ENCODE measurements at regions of chr14 and their contacts with region 1.

Region 1: GRCh38 chr14:70567791-70568190 is 32.7 kb downstream of the MED6 start:
- DNase-seq: peak; percentile 28
- H3K4me3 Mint-ChIP-seq: no peak overlapping the region
- H3K27ac Mint-ChIP-seq: no peak overlapping the region
- H3K4me1 Mint-ChIP-seq: no peaks in the 10 kb centered on the region
- H3K27me3 Mint-ChIP-seq: no peaks in the 10 kb centered on the region

Region 2: DNA sequence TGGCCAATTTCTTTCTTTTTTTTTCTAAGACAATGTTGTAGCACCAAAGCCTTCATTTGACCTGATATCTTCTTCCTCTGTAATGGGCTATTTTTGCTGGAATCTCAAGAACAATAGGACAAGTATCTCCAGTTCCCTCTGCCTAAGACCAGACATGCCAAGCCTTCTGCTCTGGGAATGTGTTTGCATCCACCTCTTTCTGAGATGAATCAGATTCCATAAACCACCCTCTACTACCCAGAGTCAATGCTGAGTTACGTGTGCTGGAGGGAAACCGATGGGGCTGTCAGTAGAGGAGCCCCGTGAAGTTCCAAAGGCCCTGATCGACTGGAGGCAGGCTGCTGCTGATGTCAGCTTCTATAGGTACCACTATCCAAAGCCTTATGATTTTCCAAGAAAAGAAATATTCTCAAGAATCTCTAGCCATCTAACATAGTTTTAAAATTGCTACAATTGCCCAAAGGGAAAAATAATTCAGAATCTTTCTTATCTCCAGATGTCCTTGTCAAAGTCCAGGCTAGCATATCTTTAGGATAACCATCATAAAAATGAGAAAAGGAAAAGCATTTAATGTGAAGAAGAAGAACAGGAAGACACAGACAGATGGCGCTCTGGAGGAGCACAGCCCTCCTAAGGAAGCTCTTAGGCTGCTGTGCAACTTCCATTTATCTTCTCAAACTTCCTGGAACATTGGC is 481.0 kb before region 1 on chr14:
- CTCF ChIA-PET with region 1: interaction called, 22 read pairs
- DNase-seq: peak; percentile 25
- H3K4me3 Mint-ChIP-seq: no peak overlapping the region
- H3K27ac Mint-ChIP-seq: no peak overlapping the region
- H3K4me1 Mint-ChIP-seq: no peaks in the 10 kb centered on the region
- H3K27me3 Mint-ChIP-seq: peaks cover 12% of the 10 kb centered on the region

Measured in activated naive CD4-positive, alpha-beta T cell treated with anti-CD3 and anti-CD28 coated beads, Interleukin-2, amount 10 ng/mL, durations not matched to agents 7 days and 5 days (primary cell).